PC-3 (cell line): ENCODE measurements at regions of chr4 and their contacts with region 1.

Region 1: DNA sequence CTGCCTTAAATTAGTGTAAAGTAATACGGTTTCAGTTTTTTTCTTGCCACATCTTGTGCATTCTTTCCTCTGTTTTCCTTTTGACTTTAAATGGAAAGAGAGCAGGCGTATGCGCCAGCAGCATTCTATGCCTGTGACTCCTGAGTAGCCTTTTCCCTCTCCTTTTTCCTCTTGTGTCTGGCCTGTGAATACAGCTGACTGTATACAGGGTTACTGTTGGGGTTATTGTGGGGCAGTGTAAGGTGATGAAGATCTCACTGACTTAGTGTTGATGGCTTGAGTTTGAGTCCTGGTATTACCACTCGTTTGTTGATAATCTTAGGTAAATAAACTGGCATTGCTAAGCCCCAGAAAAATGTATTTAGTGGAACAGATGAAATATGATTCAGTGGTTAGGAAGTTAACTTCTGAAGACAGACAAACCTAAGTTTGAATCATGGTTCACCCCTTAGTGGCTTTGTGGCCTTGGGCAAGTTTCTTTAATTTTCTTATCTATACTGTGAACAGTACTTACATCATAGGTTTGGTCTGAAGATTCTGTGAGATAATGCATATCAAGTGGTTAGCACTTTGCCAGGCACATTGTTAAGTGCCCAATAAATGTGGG is 105.1 kb downstream of the FNIP2 start:
- DNase-seq: peak; percentile 88
- ATAC-seq: peak; percentile 96
- H3K4me3 ChIP-seq: no peak overlapping the region
- H3K27ac ChIP-seq: peak overlapping the region; percentile 39; the same call in 1 of the 2 replicates
- H3K4me1 ChIP-seq: peaks cover 18% of the 10 kb centered on the region
- H3K27me3 ChIP-seq: no peaks in the 10 kb centered on the region
- CTCF ChIP-seq: no peak

Region 2: DNA sequence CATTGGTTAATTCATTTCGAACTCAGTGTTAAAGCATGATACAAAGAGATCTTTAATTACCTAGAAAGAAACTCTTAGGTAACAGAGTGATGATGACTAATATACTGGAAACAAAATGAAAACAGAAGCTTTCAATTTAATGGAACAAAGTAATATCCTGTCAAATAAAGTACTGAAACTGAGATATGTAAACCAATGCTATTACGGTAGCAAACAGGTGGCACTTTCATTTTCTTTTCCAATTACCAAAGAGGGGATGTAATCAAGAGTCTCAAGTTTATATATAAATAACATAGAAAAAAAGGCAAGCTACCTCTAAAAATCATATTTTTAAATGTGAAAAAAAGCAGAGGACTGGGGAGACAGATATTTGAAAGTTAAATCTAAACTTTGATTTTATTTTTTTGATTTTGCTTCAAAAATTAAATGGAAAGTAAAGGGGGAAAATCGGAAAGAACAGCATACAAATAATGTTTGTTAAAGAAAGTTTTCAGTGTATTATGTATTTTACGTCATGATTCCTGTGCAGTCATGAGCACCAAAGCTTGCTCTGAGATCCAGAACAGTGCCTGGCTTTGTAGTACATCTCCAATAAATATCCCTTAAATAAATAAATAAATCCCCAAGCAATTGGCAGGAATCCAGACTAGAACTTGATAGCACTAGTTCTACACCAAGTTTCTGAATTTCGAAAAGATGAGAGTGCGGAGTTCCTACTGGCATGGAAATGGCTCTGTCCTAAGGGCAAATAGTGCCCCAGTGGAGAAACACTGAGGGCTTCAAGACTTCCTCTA is 204.0 kb after region 1 on chr4:
- CTCF ChIA-PET with region 1: no interaction called
- POLR2A ChIA-PET with region 1: no interaction called
- intact Hi-C with region 1: loop called (anchors 10 kb)
- DNase-seq: peak; percentile 82
- ATAC-seq: peak; percentile 73
- H3K4me3 ChIP-seq: peak overlapping the region; percentile 49; the same call in 1 of the 2 replicates
- H3K27ac ChIP-seq: peak overlapping the region; percentile 64
- H3K4me1 ChIP-seq: peaks cover 16% of the 10 kb centered on the region
- H3K27me3 ChIP-seq: no peaks in the 10 kb centered on the region
- CTCF ChIP-seq: no peak